Activated CD8-positive, alpha-beta T cell treated with anti-CD3 and anti-CD28 coated beads for 36 hours (primary cell): ENCODE measurements at regions of chr6 and their contacts with region 1.

Region 1: GRCh38 chr6:136317021-136317694 is 27.5 kb upstream of the BCLAF1 start:
- DNase-seq: peak; percentile 74
- ATAC-seq: peak; percentile 88
- H3K4me3 Mint-ChIP-seq: no peak overlapping the region
- H3K27ac Mint-ChIP-seq: no peak overlapping the region
- H3K4me1 Mint-ChIP-seq: no peaks in the 10 kb centered on the region
- H3K27me3 Mint-ChIP-seq: peaks cover 2% of the 10 kb centered on the region
- CTCF ChIP-seq: peak; percentile 77

Region 2: DNA sequence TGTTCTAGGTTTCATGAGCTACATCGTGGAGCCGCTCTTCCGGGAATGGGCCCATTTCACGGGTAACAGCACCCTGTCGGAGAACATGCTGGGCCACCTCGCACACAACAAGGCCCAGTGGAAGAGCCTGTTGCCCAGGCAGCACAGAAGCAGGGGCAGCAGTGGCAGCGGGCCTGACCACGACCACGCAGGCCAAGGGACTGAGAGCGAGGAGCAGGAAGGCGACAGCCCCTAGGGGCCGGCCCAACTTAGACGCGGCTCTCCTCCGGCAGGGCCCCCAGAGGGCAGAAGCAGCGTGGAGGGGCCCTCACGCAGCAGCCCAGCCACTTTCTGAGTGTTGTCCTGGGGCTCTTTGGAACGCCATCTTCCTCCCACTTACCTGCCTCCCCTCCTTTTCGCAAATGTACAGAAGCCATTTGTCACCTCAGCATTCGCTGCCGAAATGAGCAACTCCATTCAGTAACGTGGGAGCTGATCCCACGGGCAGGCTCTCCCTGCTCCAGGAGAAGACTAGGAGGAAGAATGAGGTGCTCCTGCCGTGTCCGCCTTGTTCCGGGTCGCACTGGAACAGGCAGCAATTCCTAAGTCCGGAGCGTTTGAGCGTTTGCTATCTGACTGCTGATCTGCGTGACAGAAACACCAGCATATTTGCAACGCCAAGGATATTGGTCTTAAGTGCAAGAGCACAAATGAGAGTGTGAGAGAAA is 125.4 kb before region 1 on chr6:
- CTCF ChIA-PET with region 1: no interaction called
- POLR2A ChIA-PET with region 1: no interaction called
- intact Hi-C with region 1: no loop called
- DNase-seq: no peak
- ATAC-seq: no peak
- H3K4me3 Mint-ChIP-seq: no peak overlapping the region
- H3K27ac Mint-ChIP-seq: no peak overlapping the region
- H3K4me1 Mint-ChIP-seq: no peaks in the 10 kb centered on the region
- H3K27me3 Mint-ChIP-seq: no peaks in the 10 kb centered on the region
- CTCF ChIP-seq: no peak

Region 3: GRCh38 chr6:136262940-136263339 is 54.2 kb before region 1 on chr6:
- CTCF ChIA-PET with region 1: interaction called, 3 read pairs
- POLR2A ChIA-PET with region 1: no interaction called
- intact Hi-C with region 1: loop called (anchors 10 kb)
- DNase-seq: no peak
- ATAC-seq: no peak
- H3K4me3 Mint-ChIP-seq: no peak overlapping the region
- H3K27ac Mint-ChIP-seq: peak overlapping the region; percentile 66
- H3K4me1 Mint-ChIP-seq: peaks cover 32% of the 10 kb centered on the region
- H3K27me3 Mint-ChIP-seq: no peaks in the 10 kb centered on the region
- CTCF ChIP-seq: no peak

Region 4: DNA sequence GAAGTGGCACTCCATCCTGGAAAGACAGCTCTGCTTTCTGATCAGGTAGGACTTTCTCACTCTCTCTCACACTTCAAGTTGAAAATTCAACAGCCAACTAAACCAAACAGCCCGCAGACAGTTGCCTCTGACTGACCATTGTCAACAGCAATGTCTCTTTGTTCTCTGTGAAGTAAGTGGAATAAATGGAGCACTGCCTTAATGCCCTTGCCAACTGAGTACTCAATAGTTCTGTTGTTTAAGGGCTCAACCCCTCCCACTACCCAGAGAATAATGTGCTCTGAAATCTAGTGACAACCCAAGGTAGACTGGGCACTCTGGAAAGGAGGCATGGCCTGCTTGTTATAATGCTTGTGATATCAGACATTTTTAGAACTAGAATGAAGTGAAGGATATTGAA is 10.7 kb before region 1 on chr6:
- CTCF ChIA-PET with region 1: interaction called, 11 read pairs
- POLR2A ChIA-PET with region 1: no interaction called
- intact Hi-C with region 1: no loop called
- DNase-seq: no peak
- ATAC-seq: no peak
- H3K4me3 Mint-ChIP-seq: no peak overlapping the region
- H3K27ac Mint-ChIP-seq: no peak overlapping the region
- H3K4me1 Mint-ChIP-seq: no peaks in the 10 kb centered on the region
- H3K27me3 Mint-ChIP-seq: peaks cover 3% of the 10 kb centered on the region
- CTCF ChIP-seq: no peak

Region 5: GRCh38 chr6:136351518-136352110 is 34.5 kb after region 1 on chr6:
- CTCF ChIA-PET with region 1: no interaction called
- POLR2A ChIA-PET with region 1: no interaction called
- intact Hi-C with region 1: no loop called
- DNase-seq: no peak
- ATAC-seq: no peak
- H3K4me3 Mint-ChIP-seq: no peak overlapping the region
- H3K27ac Mint-ChIP-seq: no peak overlapping the region
- H3K4me1 Mint-ChIP-seq: no peaks in the 10 kb centered on the region
- H3K27me3 Mint-ChIP-seq: peaks cover 1% of the 10 kb centered on the region
- CTCF ChIP-seq: no peak

Region 6: GRCh38 chr6:136466777-136467176 is 149.6 kb after region 1 on chr6:
- CTCF ChIA-PET with region 1: no interaction called
- POLR2A ChIA-PET with region 1: no interaction called
- intact Hi-C with region 1: no loop called
- DNase-seq: no peak
- ATAC-seq: no peak
- H3K4me3 Mint-ChIP-seq: no peak overlapping the region
- H3K27ac Mint-ChIP-seq: no peak overlapping the region
- H3K4me1 Mint-ChIP-seq: peaks cover 6% of the 10 kb centered on the region
- H3K27me3 Mint-ChIP-seq: peaks cover 5% of the 10 kb centered on the region
- CTCF ChIP-seq: no peak

Region 7: DNA sequence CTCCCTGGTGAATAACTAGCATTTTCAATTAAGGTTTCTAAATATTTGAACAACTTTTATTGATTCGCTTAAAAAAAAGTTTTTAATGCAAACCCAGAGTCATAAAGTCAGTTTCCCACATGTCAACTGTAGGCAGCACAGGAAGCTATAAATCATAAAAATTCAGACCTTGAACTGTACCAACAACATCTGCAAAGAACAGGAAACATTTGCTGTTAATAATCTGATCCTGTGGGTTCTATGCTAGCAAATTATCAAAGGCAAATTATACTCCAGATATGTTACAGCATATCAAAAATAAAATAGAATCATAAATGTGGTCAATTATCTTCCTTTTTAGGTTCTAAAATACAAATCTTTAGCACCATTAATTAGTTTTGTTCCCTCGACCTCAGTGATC is 249.7 kb after region 1 on chr6:
- CTCF ChIA-PET with region 1: no interaction called
- POLR2A ChIA-PET with region 1: no interaction called
- intact Hi-C with region 1: no loop called
- DNase-seq: no peak
- ATAC-seq: no peak
- H3K4me3 Mint-ChIP-seq: no peak overlapping the region
- H3K27ac Mint-ChIP-seq: no peak overlapping the region
- H3K4me1 Mint-ChIP-seq: peaks cover 5% of the 10 kb centered on the region
- H3K27me3 Mint-ChIP-seq: no peaks in the 10 kb centered on the region
- CTCF ChIP-seq: no peak